Endothelial cell of umbilical vein (primary cell): ENCODE measurements at regions of chr4 and their contacts with region 1.

Region 1: GRCh38 chr4:143513306-143514168 is at the start of gene SMARCA5:
- DNase-seq: peak; percentile 99
- H3K4me3 ChIP-seq: peak within 1 kb of the TSS; percentile 81 to 88 (median 84)
- H3K27ac ChIP-seq: peak within 1 kb of the TSS; percentile 76
- H3K4me1 ChIP-seq: peaks cover 23% of the 10 kb centered on the region
- H3K27me3 ChIP-seq: peaks cover 3 to 11% of the 10 kb centered on the region in 2 experiments
- CTCF ChIP-seq: no peak
- POLR2A ChIP-seq: peak; percentile 73
- total RNA-seq, gene SMARCA5: 54.4 and 57.6 TPM in 2 replicates

Region 2: GRCh38 chr4:141768954-141769353 is 1744.6 kb before region 1 on chr4:
- CTCF ChIA-PET with region 1: no interaction called
- POLR2A ChIA-PET with region 1: no interaction called
- dilution Hi-C with region 1: no loop called
- intact Hi-C with region 1: loop called (anchors 10 kb)
- DNase-seq: peak; percentile 93
- H3K4me3 ChIP-seq: no peak overlapping the region
- H3K27ac ChIP-seq: peak overlapping the region; percentile 87
- H3K4me1 ChIP-seq: peaks cover 13% of the 10 kb centered on the region
- H3K27me3 ChIP-seq: no peaks in the 10 kb centered on the region
- CTCF ChIP-seq: no peak
- POLR2A ChIP-seq: no peak

Region 3: DNA sequence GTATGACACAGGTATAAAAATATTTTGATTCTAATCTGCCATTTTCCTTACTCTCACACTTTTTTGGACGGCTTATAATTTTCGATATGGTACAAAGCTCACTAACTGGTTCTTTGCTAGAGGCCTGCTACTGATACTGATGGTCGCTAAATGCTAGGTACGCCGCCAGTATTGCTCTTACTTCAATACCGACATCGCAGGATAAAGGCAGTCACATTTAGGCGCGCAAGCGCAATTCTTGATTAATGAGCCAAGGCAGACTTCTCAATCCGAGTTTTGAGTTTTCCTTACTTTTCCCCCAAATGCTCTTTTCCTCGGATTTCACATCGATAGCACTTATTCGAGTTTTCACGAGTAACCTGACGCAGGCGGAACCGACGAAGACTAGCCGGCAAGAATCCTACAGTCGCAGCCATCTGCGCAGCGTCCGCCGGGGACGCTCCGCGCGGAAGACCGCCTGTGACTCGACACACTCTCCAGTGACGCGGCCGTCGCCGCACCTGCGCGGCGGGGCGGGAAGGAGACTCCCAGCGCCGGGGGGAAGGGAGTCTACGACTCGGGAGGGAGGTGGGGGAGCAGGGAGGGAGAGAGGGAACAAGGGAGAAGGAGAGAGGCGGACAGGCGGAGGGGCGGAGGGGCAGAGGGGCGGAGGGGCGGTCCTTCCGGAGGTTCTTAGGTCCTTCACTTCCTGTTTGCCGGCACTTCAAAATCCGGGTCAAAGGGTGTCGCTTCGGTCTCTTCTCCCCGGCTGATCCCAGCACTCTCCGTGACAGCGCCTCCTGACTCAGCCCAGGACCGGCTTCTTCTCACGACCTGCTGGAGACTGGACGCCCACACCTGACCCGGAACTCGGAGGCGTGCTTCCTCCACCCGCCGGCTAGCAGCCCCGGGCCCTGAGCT is 329.1 kb before region 1 on chr4 and contains the start of gene USP38:
- CTCF ChIA-PET with region 1: no interaction called
- POLR2A ChIA-PET with region 1: no interaction called
- dilution Hi-C with region 1: no loop called
- intact Hi-C with region 1: loop called (anchors 1 kb)
- DNase-seq: peak; percentile 90
- H3K4me3 ChIP-seq: peak within 1 kb of the TSS; percentile 64 to 84 (median 69)
- H3K27ac ChIP-seq: peak within 1 kb of the TSS; percentile 73
- H3K4me1 ChIP-seq: peaks cover 30% of the 10 kb centered on the region
- H3K27me3 ChIP-seq: no peaks in the 10 kb centered on the region
- CTCF ChIP-seq: no peak
- POLR2A ChIP-seq: peak; percentile 49
- total RNA-seq, gene USP38: 17.0 and 18.1 TPM in 2 replicates

Region 4: DNA sequence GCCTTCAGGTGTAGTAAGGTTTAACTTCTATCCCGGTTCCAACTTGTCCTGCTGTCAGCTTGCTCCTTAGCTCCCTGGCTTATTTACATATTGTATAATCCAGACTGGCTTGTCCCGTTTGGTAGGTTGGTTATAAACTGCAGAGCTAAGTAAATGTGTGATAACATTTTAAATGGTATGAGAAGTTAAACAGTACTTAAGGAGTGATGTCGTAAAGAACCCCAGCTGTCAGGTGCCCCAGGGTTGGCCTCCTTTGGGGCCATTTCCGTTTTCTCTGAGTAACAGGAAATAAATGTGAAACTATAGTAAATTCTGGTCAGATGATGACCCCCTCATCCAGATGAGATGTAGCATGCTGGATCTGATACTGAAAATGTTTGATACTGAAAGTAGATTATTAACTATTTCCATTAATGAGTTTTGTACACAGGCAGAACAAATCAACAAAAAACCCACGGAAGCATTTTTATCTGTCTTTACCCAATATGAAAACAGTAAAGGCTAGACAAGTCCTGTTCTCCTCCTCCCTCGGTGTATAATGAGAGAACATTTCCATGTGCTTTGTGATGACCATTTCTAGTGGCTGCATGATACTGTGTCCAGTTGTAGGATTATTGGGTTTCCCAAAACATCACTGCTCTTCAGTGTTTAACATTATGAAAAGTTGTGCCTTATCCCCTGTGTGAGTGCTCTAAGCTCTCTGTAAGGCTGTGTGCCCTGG is 154.5 kb before region 1 on chr4:
- CTCF ChIA-PET with region 1: interaction called, 3 read pairs
- POLR2A ChIA-PET with region 1: no interaction called
- dilution Hi-C with region 1: no loop called
- intact Hi-C with region 1: loop called (anchors 1 kb)
- DNase-seq: peak; percentile 96
- H3K4me3 ChIP-seq: peak overlapping the region in 1 of 3 experiments; percentile 15
- H3K27ac ChIP-seq: peak overlapping the region; percentile 54
- H3K4me1 ChIP-seq: peaks cover 26% of the 10 kb centered on the region
- H3K27me3 ChIP-seq: no peaks in the 10 kb centered on the region
- CTCF ChIP-seq: no peak
- POLR2A ChIP-seq: no peak

Region 5: DNA sequence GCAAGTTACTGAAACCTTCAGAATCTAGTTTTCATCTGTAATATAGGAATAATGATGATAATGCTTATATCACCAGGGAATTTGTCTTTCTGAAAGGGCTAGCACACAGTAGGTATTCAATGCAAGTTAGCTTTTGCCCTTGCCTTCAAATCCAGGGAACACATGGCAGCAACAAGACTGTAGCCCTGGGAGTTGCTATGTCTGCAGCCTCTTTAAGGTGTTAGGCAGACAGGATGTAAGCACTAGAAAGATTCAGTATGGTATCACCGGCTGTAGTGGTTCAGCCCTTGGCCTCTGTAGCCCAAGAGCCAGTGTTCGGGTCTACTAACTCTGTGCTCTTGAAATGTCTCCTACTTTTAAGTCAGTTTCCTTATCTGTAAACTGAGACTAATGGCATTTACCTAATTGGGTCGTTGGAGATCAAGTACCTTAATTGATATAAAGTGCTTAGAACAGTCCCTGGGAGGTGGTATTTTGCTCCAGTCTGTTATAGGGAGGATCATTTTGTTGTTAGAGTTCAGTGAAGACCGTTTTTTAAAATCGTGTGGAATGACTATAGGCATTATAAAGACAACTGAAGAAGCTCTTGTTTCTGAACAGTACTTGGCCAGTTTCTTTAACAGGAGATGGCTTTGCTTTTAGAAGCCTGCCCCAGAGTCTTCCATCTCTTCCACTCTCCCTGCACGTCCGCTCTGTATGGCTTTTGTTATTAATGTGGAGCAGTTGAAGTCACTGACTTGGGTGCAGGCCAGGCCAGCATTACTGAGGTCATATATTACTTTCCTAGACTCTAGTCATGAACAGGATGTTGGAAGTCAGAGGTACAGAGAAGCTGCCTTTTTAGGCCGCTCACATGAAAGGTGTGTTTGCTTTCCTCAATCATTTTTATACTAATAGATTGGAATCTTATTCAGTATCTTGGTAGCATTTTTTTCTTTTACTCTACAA is 132.1 kb before region 1 on chr4:
- CTCF ChIA-PET with region 1: no interaction called
- POLR2A ChIA-PET with region 1: no interaction called
- dilution Hi-C with region 1: no loop called
- intact Hi-C with region 1: loop called (anchors 5 kb)
- DNase-seq: peak; percentile 98
- H3K4me3 ChIP-seq: peak overlapping the region in 1 of 3 experiments; percentile 26
- H3K27ac ChIP-seq: peak overlapping the region; percentile 53
- H3K4me1 ChIP-seq: peaks cover 24% of the 10 kb centered on the region
- H3K27me3 ChIP-seq: no peaks in the 10 kb centered on the region
- CTCF ChIP-seq: no peak
- POLR2A ChIP-seq: no peak

Region 6: GRCh38 chr4:143399113-143399949 is 114.2 kb before region 1 on chr4:
- CTCF ChIA-PET with region 1: no interaction called
- POLR2A ChIA-PET with region 1: interaction called, 3 read pairs
- dilution Hi-C with region 1: no loop called
- intact Hi-C with region 1: loop called (anchors 2 kb)
- DNase-seq: peak; percentile 72
- H3K4me3 ChIP-seq: no peak overlapping the region
- H3K27ac ChIP-seq: no peak overlapping the region
- H3K4me1 ChIP-seq: peaks cover 33% of the 10 kb centered on the region
- H3K27me3 ChIP-seq: no peaks in the 10 kb centered on the region
- CTCF ChIP-seq: peak; percentile 46 to 48
- POLR2A ChIP-seq: no peak

Region 7: DNA sequence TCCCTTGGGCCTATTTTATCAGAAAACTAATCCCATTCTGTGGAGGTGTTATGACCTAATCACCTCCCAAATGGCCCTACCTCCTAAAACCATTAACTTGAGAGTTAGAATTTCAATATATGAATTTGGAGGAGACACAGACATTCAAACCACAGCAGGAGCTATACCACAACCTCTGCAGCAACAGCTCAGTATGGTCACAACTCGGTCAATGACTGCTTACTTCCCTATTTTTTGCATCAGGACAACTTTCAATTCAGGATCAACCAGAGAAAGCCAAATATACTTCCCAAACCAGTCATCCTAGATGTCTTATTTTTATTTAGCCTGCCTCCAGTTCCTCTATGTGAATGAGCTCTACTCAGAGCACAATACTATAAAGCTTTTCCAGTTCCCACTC is 11.3 kb before region 1 on chr4:
- CTCF ChIA-PET with region 1: no interaction called
- POLR2A ChIA-PET with region 1: no interaction called
- dilution Hi-C with region 1: no loop called
- intact Hi-C with region 1: no loop called
- DNase-seq: no peak
- H3K4me3 ChIP-seq: no peak overlapping the region
- H3K27ac ChIP-seq: no peak overlapping the region
- H3K4me1 ChIP-seq: no peaks in the 10 kb centered on the region
- H3K27me3 ChIP-seq: peaks cover 0 to 3% of the 10 kb centered on the region in 2 experiments
- CTCF ChIP-seq: no peak
- POLR2A ChIP-seq: no peak

Region 8: DNA sequence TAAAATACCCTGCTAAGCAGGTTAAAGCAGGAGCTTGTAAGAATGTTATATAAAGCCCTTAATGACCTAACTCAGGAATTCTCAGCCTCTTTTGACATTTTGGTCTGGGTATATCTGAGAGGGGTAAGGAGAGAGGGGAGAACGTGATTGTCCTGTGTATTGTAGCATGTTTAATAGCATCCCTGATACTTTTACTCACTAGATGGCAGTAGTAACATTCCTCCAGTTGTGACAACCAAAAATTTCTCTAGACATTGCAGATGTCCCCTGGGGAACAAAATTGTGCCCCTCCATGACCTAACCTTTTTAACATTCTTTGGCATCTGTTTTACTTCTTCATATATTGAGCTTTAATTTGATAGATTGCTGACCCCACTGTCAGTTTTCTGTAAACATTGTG is 17.8 kb after region 1 on chr4:
- CTCF ChIA-PET with region 1: interaction called, 19 read pairs
- POLR2A ChIA-PET with region 1: interaction called, 4 read pairs
- dilution Hi-C with region 1: no loop called
- intact Hi-C with region 1: loop called (anchors 1 kb)
- DNase-seq: peak; percentile 59
- H3K4me3 ChIP-seq: peak overlapping the region in 1 of 3 experiments; percentile 44
- H3K27ac ChIP-seq: peak overlapping the region; percentile 57
- H3K4me1 ChIP-seq: peaks cover 18% of the 10 kb centered on the region
- H3K27me3 ChIP-seq: no peaks in the 10 kb centered on the region
- CTCF ChIP-seq: peak; percentile 42 to 43
- POLR2A ChIP-seq: no peak

Region 9: DNA sequence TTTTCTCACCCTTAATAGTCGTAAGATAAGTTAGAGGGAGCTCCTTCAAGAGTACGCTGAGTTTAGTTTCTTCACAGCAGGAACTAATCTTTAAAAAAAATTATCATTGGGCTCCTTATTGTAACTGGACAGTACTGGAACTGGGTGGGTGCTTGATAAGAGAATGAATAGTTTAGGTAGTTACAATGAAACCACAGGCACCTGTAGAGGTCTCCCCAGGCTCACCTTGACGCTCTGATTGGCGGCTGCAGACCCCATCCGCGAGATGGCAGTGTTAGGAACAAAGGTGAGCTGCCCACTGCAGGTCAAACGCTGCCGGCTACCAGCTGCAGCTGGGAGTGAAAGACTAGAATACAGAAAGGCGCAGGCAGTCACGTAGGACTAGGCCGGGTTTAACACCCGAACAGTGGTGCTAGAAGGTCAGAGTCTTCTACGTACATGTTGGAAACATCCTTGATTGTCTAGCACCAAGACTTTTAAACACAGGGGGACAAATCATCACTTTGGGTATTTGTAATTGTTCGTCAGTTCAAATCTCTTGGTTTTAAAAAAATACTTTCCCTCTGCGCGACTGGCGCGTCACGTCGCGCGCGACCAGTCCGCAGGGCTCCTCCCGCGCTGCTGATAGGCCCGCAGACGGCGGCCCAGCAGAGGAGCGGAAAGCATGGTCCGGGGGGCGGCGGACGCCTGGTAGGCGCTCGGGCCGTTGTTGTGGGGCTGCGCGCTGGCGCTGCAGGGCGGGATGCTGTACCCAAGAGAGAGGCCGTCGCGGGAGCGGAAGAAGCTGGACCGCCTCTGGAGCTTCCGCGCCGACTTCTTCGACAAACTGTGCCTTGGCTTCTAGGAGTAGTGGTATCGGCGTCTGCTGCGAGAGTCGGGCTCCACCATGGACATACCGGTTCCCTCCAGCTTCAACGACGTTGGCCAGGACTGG is 45.6 kb after region 1 on chr4:
- CTCF ChIA-PET with region 1: no interaction called
- POLR2A ChIA-PET with region 1: no interaction called
- dilution Hi-C with region 1: no loop called
- intact Hi-C with region 1: no loop called
- DNase-seq: peak; percentile 85
- H3K4me3 ChIP-seq: peak overlapping the region; percentile 39 to 70 (median 43)
- H3K27ac ChIP-seq: peak overlapping the region; percentile 25
- H3K4me1 ChIP-seq: peaks cover 4% of the 10 kb centered on the region
- H3K27me3 ChIP-seq: no peaks in the 10 kb centered on the region
- CTCF ChIP-seq: peak; percentile 47 to 69
- POLR2A ChIP-seq: peak; percentile 42